ENCODE measurements at regions of chr12 and their contacts with region 1.

Region 1: DNA sequence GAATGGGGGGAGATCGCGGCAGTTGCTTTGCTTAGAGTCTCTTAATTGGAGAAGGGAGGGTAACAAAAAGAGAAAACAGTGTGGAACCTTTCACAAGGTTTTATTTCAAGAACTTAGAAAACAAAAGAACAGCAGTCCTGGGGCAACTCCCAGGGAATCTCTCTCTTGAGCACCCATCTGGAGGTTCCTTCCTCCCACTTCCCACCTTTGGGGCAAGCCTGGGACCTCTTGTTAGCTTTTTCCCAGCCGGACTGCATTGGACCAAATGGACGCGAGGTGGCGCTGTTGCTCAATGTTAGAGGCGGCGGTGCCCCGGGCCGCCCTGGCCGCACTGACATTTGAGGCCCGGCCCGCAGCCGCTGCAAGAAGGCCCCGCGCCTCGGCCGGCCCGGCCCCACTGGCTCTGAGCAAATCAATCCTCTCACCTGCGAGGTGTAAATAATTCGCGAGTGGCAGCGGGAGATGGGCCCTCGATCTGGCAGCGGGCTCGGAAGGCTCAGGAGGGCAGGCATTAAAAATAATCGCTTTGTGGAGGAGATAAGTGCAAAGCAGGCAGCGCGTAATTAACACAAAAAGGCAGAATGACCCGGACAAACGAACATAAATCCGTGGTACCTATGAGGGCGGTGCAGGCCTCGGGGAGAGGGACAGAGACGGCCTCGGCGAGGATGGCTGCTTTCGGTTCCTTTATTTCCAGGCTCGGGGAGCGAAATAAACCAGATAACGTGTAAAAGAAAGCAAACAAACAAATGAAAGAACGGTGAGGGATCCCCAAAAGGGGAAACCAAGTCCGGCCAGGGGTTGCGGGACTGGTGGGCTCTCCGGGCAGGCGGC is 2.7 kb upstream of the HOXC8 start:
- DNase-seq: peak; percentile 82 to 92
- H3K4me3 ChIP-seq: peak overlapping the region; percentile 53
- H3K4me3 Mint-ChIP-seq: peak overlapping the region; percentile 87
- H3K27ac Mint-ChIP-seq: peak overlapping the region; percentile 58
- H3K4me1 ChIP-seq: peaks cover 41% of the 10 kb centered on the region
- H3K4me1 Mint-ChIP-seq: peaks cover 10% of the 10 kb centered on the region
- H3K27me3 ChIP-seq: no peaks in the 10 kb centered on the region
- H3K27me3 Mint-ChIP-seq: no peaks in the 10 kb centered on the region
- CTCF ChIP-seq: peak; percentile 85 to 90

Region 2: GRCh38 chr12:53984901-53985709 is 21.0 kb before region 1 on chr12 and contains the start of gene HOXC10:
- CTCF ChIA-PET with region 1: interaction called, 10 read pairs
- POLR2A ChIA-PET with region 1: interaction called, 7 read pairs
- intact Hi-C with region 1: no loop called
- DNase-seq: peak; percentile 90 to 92
- H3K4me3 ChIP-seq: peak within 1 kb of the TSS; percentile 52
- H3K4me3 Mint-ChIP-seq: peak within 1 kb of the TSS; percentile 77
- H3K27ac Mint-ChIP-seq: peak within 1 kb of the TSS; percentile 81
- H3K4me1 ChIP-seq: peaks cover 41% of the 10 kb centered on the region
- H3K4me1 Mint-ChIP-seq: peaks cover 29% of the 10 kb centered on the region
- H3K27me3 ChIP-seq: no peaks in the 10 kb centered on the region
- H3K27me3 Mint-ChIP-seq: no peaks in the 10 kb centered on the region
- CTCF ChIP-seq: peak; percentile 77 to 83
- total RNA-seq, gene HOXC10: 4.0 and 4.5 TPM in 2 replicates

Region 3: GRCh38 chr12:54022960-54023884 is 17.2 kb after region 1 on chr12:
- CTCF ChIA-PET with region 1: interaction called, 84 read pairs
- POLR2A ChIA-PET with region 1: interaction called, 25 read pairs
- intact Hi-C with region 1: loop called (anchors 1 kb)
- DNase-seq: no peak
- H3K4me3 ChIP-seq: no peak overlapping the region
- H3K4me3 Mint-ChIP-seq: no peak overlapping the region
- H3K27ac Mint-ChIP-seq: no peak overlapping the region
- H3K4me1 ChIP-seq: peaks cover 9% of the 10 kb centered on the region
- H3K4me1 Mint-ChIP-seq: peaks cover 26% of the 10 kb centered on the region
- H3K27me3 ChIP-seq: no peaks in the 10 kb centered on the region
- H3K27me3 Mint-ChIP-seq: no peaks in the 10 kb centered on the region
- CTCF ChIP-seq: no peak

Region 4: GRCh38 chr12:54053751-54054741 is 48.0 kb after region 1 on chr12 and contains the start of gene HOXC4:
- CTCF ChIA-PET with region 1: interaction called, 10 read pairs
- POLR2A ChIA-PET with region 1: no interaction called
- intact Hi-C with region 1: no loop called
- DNase-seq: no peak
- H3K4me3 ChIP-seq: peak within 1 kb of the TSS; percentile 38
- H3K4me3 Mint-ChIP-seq: peak within 1 kb of the TSS; percentile 51
- H3K27ac Mint-ChIP-seq: no peak within 1 kb of the TSS
- H3K4me1 ChIP-seq: peaks cover 14% of the 10 kb centered on the region
- H3K4me1 Mint-ChIP-seq: peaks cover 24% of the 10 kb centered on the region
- H3K27me3 ChIP-seq: no peaks in the 10 kb centered on the region
- H3K27me3 Mint-ChIP-seq: no peaks in the 10 kb centered on the region
- CTCF ChIP-seq: no peak
- total RNA-seq, gene HOXC4: 2.9 and 4.1 TPM in 2 replicates

Region 5: DNA sequence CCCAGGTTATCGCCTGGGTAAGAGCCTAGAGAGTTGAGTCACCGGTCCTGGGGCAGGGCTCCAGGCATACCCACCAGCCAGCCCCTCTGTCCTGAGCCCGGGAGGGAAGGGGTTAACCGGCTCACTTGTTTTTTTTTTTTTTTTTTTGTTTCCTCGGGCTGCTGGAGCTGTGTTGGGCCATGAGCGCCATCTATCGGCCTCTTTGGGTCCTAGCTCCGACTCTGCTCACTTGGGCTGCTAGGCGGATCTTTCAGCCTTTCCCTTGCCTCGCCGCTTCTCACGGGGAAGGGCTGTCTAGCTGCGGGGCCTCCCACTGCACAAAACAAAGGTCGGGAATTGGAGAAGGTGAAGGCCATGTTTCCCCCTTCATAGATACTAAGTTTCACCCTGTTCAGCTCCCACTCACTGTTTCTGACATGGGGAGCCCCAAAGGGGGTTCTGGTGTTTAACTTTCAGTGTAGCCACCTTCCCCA is 185.5 kb after region 1 on chr12:
- CTCF ChIA-PET with region 1: interaction called, 18 read pairs
- POLR2A ChIA-PET with region 1: interaction called, 10 read pairs
- intact Hi-C with region 1: loop called (anchors 1 kb)
- DNase-seq: peak; percentile 86 to 87
- H3K4me3 ChIP-seq: no peak overlapping the region
- H3K4me3 Mint-ChIP-seq: no peak overlapping the region
- H3K27ac Mint-ChIP-seq: no peak overlapping the region
- H3K4me1 ChIP-seq: peaks cover 37% of the 10 kb centered on the region
- H3K4me1 Mint-ChIP-seq: peaks cover 16% of the 10 kb centered on the region
- H3K27me3 ChIP-seq: no peaks in the 10 kb centered on the region
- H3K27me3 Mint-ChIP-seq: no peaks in the 10 kb centered on the region
- CTCF ChIP-seq: peak; percentile 74 to 80

Region 6: DNA sequence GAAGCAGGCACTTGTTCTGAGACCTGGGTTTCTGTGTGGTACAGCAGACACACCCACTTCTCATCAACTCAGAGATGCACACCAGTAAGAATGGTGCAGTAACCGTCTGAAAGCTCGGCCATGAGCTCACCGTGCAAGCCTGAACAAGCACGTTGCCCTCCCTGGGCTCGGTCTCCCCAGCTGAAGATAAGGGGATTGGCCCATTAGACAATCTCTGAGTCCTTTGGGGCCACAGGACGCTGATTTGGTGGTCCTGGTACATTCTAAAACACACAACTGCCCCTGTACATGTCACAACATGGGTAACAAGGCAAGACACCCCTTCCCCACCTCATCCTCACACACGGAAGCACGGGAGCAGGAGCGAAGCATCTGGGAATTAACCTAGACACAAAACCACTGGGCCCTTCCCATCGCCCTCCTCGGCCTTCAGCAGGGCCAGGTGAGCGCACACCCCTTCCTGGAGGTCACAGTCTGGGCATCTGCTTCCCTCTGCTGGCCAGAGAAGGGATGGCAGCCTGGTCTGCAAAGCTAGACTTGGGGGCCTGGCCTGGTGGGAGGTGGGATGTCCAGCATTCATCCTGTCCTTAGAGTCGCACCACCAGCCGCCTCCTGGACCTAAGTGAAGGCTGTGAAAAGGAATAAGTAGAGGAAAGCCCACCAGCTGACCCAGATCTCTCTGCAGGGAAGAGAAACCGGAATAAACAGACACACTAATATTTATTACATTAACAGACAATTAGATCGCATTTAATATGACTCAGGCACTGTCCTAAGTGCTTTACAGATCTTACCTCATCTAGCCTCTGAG is 201.6 kb after region 1 on chr12:
- CTCF ChIA-PET with region 1: interaction called, 14 read pairs
- POLR2A ChIA-PET with region 1: no interaction called
- intact Hi-C with region 1: loop called (anchors 1 kb)
- DNase-seq: peak; percentile 86 to 91
- H3K4me3 ChIP-seq: no peak overlapping the region
- H3K4me3 Mint-ChIP-seq: no peak overlapping the region
- H3K27ac Mint-ChIP-seq: no peak overlapping the region
- H3K4me1 ChIP-seq: peaks cover 7% of the 10 kb centered on the region; the same call in 1 of the 2 replicates
- H3K4me1 Mint-ChIP-seq: peaks cover 7% of the 10 kb centered on the region
- H3K27me3 ChIP-seq: no peaks in the 10 kb centered on the region
- H3K27me3 Mint-ChIP-seq: no peaks in the 10 kb centered on the region
- CTCF ChIP-seq: peak; percentile 92 to 94

Region 7: GRCh38 chr12:54452628-54453027 is 446.6 kb after region 1 on chr12:
- CTCF ChIA-PET with region 1: no interaction called
- POLR2A ChIA-PET with region 1: interaction called, 27 read pairs
- intact Hi-C with region 1: no loop called
- DNase-seq: no peak
- H3K4me3 ChIP-seq: no peak overlapping the region
- H3K4me3 Mint-ChIP-seq: no peak overlapping the region
- H3K27ac Mint-ChIP-seq: no peak overlapping the region
- H3K4me1 ChIP-seq: peaks cover 18% of the 10 kb centered on the region
- H3K4me1 Mint-ChIP-seq: no peaks in the 10 kb centered on the region
- H3K27me3 ChIP-seq: no peaks in the 10 kb centered on the region
- H3K27me3 Mint-ChIP-seq: no peaks in the 10 kb centered on the region
- CTCF ChIP-seq: no peak

Measured in Caco-2 (cell line).